ENCODE measurements at regions of chr13 and their contacts with region 1.

Region 1: GRCh38 chr13:26914624-26915023 is 154.0 kb upstream of the GPR12 start:
- DNase-seq: no peak
- H3K4me3 ChIP-seq: no peak overlapping the region
- H3K27ac ChIP-seq: no peak overlapping the region
- H3K4me1 ChIP-seq: no peaks in the 10 kb centered on the region
- H3K27me3 ChIP-seq: peaks cover 0 to 8% of the 10 kb centered on the region in 2 donors
- CTCF ChIP-seq: no peak

Region 2: DNA sequence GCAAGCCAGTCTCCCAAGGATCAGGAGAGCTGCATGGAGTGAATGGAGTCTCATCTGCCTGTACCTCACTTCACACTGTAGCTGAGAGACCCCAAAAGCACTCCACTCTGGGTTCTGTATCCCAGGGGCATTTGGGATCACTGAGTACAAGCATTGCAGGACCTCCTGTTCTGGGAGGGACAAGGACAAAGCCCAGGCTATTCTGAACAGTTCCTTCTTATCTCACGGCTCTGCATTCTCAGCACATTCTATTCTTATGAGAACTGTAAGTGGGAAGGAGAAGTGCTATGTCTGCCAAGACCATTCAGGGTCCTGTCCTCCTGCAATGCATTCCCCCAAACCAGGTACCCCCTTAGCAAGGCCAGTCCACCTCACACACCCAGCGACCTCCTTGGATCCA is 735.3 kb before region 1 on chr13:
- intact Hi-C with region 1: loop called (anchors 10 kb)
- DNase-seq: no peak
- H3K4me3 ChIP-seq: no peak overlapping the region
- H3K27ac ChIP-seq: no peak overlapping the region
- H3K4me1 ChIP-seq: no peaks in the 10 kb centered on the region
- H3K27me3 ChIP-seq: no peaks in the 10 kb centered on the region
- CTCF ChIP-seq: no peak

Measured in tibial artery (tissue), 4 donors.